CD8-positive, alpha-beta memory T cell (primary cell): ENCODE measurements at regions of chr1 and their contacts with region 1.

Region 1: GRCh38 chr1:21344750-21345443 is 54.6 kb upstream of the ECE1 start:
- DNase-seq: peak in 1 of 5 donors; percentile 55
- H3K4me3 ChIP-seq: peak overlapping the region; percentile 93
- H3K4me3 Mint-ChIP-seq: peak overlapping the region; percentile 86 to 91 (median 88)
- H3K27ac ChIP-seq: peak overlapping the region; percentile 59
- H3K27ac Mint-ChIP-seq: peak overlapping the region; percentile 61 to 93 (median 82)
- H3K4me1 ChIP-seq: peaks cover 53% of the 10 kb centered on the region
- H3K4me1 Mint-ChIP-seq: peaks cover 37 to 45% (median 41%) of the 10 kb centered on the region in 3 donors
- H3K27me3 ChIP-seq: no peaks in the 10 kb centered on the region
- H3K27me3 Mint-ChIP-seq: no peaks in the 10 kb centered on the region

Region 2: GRCh38 chr1:21324368-21325141 is 20.3 kb before region 1 on chr1:
- CTCF ChIA-PET with region 1: interaction called, 5 read pairs
- POLR2A ChIA-PET with region 1: interaction called, 14 read pairs
- DNase-seq: peak in 4 of 5 donors; percentile 22 to 62 (median 44)
- H3K4me3 ChIP-seq: peak overlapping the region; percentile 16
- H3K4me3 Mint-ChIP-seq: peak overlapping the region; percentile 38 to 91 (median 79)
- H3K27ac ChIP-seq: no peak overlapping the region
- H3K27ac Mint-ChIP-seq: peak overlapping the region; percentile 82 to 95 (median 91)
- H3K4me1 ChIP-seq: peaks cover 61% of the 10 kb centered on the region
- H3K4me1 Mint-ChIP-seq: peaks cover 47 to 81% (median 73%) of the 10 kb centered on the region in 3 donors
- H3K27me3 ChIP-seq: no peaks in the 10 kb centered on the region
- H3K27me3 Mint-ChIP-seq: no peaks in the 10 kb centered on the region

Region 3: DNA sequence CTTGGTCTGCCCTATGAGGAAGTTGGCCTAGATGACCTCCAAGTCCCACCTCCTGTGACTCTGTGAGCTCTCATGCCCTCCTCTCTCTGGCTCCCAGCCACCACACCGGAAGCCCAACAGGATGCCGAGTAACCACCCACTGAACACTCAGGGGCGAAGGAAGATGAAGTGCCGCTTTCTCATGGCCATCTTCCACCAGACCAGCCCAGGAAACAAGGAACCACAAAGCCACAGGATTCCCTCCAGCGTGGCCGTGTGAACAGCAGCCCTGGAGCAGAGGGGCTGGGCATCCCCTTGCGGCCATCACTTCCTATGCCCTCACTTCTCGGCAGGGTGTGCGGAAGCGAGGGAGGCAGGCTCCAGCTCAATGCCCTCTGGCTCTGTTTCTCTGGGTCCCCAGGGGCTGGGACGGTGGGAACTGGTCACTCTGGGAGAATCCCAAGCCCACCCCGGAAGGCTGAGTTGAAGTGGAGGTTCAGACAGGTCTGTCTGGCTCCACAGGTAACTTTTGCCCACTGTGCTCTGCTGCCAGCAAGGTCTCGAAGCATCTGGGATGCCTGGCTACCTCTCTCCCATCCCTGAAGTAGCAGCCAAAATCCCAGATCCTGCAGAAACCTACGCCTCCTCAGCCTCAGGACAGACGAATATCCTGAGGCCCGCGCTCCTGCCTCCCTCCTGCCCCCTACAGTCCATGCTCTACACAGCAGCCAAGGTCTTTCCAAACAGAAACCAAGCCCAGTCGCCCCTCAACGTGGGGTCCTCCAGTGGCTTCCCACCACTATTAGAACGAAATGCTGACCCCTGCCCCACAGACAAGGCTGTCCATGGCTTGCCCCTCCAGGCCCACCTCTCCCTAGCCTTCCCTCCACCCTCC is 10.4 kb before region 1 on chr1:
- CTCF ChIA-PET with region 1: interaction called, 9 read pairs
- POLR2A ChIA-PET with region 1: interaction called, 17 read pairs
- DNase-seq: peak; percentile 74 to 91 (median 90)
- H3K4me3 ChIP-seq: peak overlapping the region; percentile 51
- H3K4me3 Mint-ChIP-seq: peak overlapping the region; percentile 76 to 91 (median 87)
- H3K27ac ChIP-seq: peak overlapping the region; percentile 69
- H3K27ac Mint-ChIP-seq: peak overlapping the region; percentile 91 to 99 (median 98)
- H3K4me1 ChIP-seq: peaks cover 84% of the 10 kb centered on the region
- H3K4me1 Mint-ChIP-seq: peaks cover 66 to 89% (median 84%) of the 10 kb centered on the region in 3 donors
- H3K27me3 ChIP-seq: no peaks in the 10 kb centered on the region
- H3K27me3 Mint-ChIP-seq: no peaks in the 10 kb centered on the region